BJ (cell line): ENCODE measurements at regions of chr1 and their contacts with region 1.

Region 1: DNA sequence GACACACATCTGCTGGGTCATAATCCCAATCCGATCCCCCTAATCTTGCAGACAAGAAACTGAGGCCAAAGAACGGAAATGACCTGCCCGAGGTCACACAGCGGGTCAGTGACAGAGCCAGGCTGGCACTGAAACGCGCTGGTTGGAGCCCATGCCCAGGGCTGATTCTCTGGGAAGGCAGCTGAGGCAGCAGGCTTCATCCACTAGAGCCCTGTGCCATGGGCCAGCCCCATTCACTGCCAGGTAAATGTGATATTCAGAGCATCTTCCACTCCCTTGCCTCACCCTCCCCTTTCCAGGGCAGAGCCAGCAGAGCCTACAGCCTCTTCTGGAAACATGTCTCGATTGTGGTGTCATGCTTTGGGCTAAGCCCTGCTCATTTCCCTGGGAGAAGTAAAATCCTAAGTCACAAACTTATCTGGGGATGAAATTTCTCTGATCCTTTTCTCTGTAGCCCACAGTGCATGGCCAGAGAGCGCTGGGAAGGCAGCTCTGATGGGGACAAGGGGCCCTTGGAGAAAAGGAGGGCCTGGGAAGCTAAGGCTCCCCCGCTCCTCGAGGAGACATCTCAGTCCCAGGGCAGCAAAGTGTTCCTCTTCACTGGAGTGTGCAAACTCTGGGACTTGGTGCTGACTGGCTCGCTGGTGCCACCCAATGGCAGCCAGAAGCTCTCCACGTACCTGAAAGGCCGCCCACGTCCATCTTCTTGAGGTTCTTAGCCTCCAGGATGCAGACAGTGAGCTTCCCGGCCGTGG is 110.4 kb downstream of the SYT2 start:
- DNase-seq: no peak
- H3K4me3 ChIP-seq: no peak overlapping the region
- H3K27me3 ChIP-seq: no peaks in the 10 kb centered on the region
- CTCF ChIP-seq: peak; percentile 93

Region 2: GRCh38 chr1:202501281-202501680 is 98.6 kb before region 1 on chr1:
- CTCF ChIA-PET with region 1: interaction called, 33 read pairs
- POLR2A ChIA-PET with region 1: no interaction called
- DNase-seq: no peak
- H3K4me3 ChIP-seq: no peak overlapping the region
- H3K27me3 ChIP-seq: no peaks in the 10 kb centered on the region
- CTCF ChIP-seq: peak; percentile 39

Region 3: DNA sequence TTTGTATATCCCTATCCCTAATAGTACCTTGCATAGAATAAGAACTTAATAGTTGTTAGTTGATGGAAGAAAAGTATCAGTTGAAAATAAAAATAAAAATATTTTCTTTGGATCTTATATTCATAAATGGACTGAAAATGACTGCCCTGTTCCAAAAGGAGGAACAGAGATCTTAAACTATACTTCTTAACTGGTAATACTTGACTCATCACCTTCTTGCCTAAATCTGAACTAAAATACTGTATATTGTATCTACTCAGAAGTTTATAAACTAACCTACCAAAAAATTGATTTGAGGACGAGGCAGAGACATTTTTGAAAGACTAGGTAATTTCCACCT is 68.4 kb before region 1 on chr1:
- CTCF ChIA-PET with region 1: no interaction called
- POLR2A ChIA-PET with region 1: no interaction called
- DNase-seq: no peak
- H3K4me3 ChIP-seq: no peak overlapping the region
- H3K27me3 ChIP-seq: no peaks in the 10 kb centered on the region
- CTCF ChIP-seq: no peak

Region 4: GRCh38 chr1:202576816-202577215 is 23.0 kb before region 1 on chr1:
- CTCF ChIA-PET with region 1: interaction called, 30 read pairs
- POLR2A ChIA-PET with region 1: no interaction called
- DNase-seq: peak; percentile 72
- H3K4me3 ChIP-seq: no peak overlapping the region
- H3K27me3 ChIP-seq: no peaks in the 10 kb centered on the region
- CTCF ChIP-seq: no peak

Region 5: GRCh38 chr1:202615501-202616354 is 15.9 kb after region 1 on chr1:
- CTCF ChIA-PET with region 1: interaction called, 23 read pairs
- POLR2A ChIA-PET with region 1: no interaction called
- DNase-seq: peak; percentile 5
- H3K4me3 ChIP-seq: no peak overlapping the region
- H3K27me3 ChIP-seq: no peaks in the 10 kb centered on the region
- CTCF ChIP-seq: no peak

Region 6: DNA sequence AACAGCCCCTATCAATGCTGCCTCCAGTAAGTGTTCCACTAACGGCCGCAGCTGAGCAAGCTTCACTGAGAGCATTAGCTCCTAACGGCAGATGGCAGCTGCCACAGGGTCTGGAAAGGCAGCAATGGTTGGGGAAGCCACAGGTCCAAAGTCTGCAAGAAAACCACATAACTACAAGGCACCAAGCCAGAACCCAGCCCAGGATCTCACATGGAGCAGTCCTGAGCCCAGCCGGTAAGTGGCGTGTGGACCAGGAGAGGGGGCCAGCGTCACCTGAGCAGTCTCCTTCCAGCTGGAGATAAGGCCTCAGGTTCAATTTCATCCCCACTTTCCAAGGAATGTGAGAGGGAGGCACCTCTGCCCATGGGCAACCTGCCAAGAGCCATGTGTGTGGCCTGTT is 97.2 kb after region 1 on chr1:
- CTCF ChIA-PET with region 1: no interaction called
- POLR2A ChIA-PET with region 1: no interaction called
- DNase-seq: no peak
- H3K4me3 ChIP-seq: no peak overlapping the region
- H3K27me3 ChIP-seq: peaks cover 14% of the 10 kb centered on the region
- CTCF ChIP-seq: no peak